ENCODE measurements at regions of chr6 and their contacts with region 1.

Region 1: DNA sequence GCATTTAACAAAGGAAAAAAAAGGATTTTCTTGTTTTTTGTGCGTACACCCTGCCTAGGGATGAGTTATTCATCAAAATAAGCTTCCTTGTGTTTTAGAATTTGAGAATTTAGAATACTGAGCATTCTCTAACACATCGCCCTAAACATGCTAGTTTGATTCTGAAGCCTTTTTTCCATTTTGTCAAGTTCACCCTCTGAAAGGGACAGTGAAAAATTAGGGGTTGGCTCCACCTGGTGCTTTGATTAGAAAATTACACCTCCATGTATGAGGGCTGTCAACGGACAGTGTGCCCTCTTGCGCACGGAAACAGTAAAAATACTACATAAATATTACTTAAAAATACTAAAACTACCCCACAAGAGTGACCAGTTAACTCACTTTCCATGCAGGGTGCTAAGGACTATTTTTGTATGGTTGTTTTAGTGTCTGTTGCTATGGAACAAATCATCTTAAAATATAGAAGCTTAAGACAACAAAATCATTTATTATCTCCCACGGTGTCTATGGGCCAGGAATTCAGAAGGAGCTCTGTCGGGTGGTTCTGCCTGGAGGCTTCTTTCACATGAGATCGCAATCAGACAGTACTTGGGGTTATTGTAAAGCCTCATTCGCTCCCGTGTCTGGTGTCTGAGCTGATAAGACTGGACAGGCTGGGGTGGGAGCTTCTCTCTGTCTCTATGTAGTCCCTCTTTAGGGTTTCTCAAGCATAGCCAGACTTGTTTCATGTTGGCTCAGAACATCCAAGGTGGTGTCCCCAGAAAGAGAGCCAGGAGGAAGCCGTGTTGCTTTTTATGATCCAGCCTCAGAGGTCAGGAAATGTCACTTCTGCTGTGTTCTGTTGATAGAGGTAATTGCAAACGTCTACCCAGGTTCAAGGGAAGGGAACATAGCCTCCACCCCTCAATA is 41.1 kb upstream of the TMEM170B start:
- DNase-seq: peak; percentile 50 to 83
- ATAC-seq: peak; percentile 72 to 90; a peak in 5 of 6 replicates
- H3K4me3 ChIP-seq: no peak overlapping the region
- H3K27ac ChIP-seq: peak overlapping the region; percentile 77 to 87
- H3K4me1 ChIP-seq: peaks cover 26% of the 10 kb centered on the region
- CTCF ChIP-seq: peak; percentile 95
- EP300 ChIP-seq: no peak
- POLR2A ChIP-seq: no peak
- RAD21 ChIP-seq: peak; percentile 98

Region 2: GRCh38 chr6:11064836-11065235 is 431.6 kb before region 1 on chr6:
- CTCF ChIA-PET with region 1: interaction called, 13 read pairs
- POLR2A ChIA-PET with region 1: no interaction called
- DNase-seq: no peak
- ATAC-seq: no peak
- H3K4me3 ChIP-seq: no peak overlapping the region
- H3K27ac ChIP-seq: no peak overlapping the region
- H3K4me1 ChIP-seq: peaks cover 3% of the 10 kb centered on the region; the same call in 1 of the 3 replicates
- CTCF ChIP-seq: no peak
- EP300 ChIP-seq: no peak
- POLR2A ChIP-seq: no peak
- RAD21 ChIP-seq: no peak

Region 3: DNA sequence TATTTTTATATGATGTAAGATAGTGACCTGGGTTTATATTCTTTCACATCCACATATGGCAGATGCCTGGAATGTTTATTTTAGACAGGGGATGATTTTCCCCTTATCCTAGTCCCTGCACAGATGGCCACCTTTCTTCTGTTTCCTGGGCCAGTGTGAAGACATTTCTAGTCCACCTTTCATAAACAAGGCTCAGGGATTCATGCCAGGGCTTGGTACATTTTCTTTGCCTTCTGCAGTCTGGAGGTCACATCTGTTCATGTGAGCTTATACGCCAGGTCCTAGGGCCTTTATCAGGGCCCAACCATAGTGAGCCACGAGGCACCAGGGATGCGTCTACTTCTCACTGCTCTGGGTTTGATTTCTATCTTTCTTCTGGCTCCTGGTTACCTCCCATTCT is 346.9 kb before region 1 on chr6:
- CTCF ChIA-PET with region 1: interaction called, 53 read pairs
- POLR2A ChIA-PET with region 1: no interaction called
- DNase-seq: no peak
- ATAC-seq: no peak
- H3K4me3 ChIP-seq: no peak overlapping the region
- H3K27ac ChIP-seq: peak overlapping the region in 1 of 2 experiments; percentile 59; a peak in 3 of 6 replicates
- H3K4me1 ChIP-seq: peaks cover 5% of the 10 kb centered on the region
- CTCF ChIP-seq: no peak
- EP300 ChIP-seq: no peak
- POLR2A ChIP-seq: no peak
- RAD21 ChIP-seq: no peak

Region 4: DNA sequence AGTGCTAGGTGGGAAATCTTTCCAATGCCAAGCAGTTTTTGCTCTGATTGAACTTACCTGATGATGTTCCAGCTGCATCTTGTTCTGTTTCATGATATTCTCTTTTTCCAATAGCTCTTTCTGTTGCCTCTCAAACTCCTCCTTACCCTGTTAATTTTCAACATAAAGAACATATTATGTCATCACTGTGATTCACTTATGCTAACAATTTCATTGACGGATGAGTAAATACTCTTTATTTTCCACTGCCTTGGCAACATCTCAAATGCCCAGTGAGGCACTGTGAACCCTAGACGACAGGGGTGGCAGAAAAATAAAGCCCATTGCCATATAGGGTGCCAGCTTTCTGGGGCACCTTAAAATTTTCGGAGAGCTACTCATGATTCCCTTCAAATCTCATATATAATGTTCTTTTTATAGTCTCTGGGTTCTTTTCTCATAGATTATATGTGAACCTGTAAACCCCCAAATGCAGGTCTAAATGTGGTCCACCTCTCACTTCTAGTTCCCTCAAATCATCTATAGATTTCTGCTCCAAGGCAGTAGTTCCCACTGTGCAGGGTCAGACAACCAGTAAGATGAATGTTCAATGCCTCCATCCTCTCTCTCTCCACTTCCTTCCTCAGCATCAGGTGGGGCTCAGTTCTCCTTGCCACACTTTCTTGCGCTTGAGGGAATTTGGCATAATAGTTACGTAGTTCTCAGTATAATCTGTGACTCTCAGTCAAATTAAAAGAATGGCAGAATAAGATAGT is 308.1 kb before region 1 on chr6:
- CTCF ChIA-PET with region 1: interaction called, 19 read pairs
- POLR2A ChIA-PET with region 1: no interaction called
- DNase-seq: peak; percentile 74 to 86
- ATAC-seq: peak; percentile 73 to 82
- H3K4me3 ChIP-seq: peak overlapping the region; percentile 36
- H3K27ac ChIP-seq: peak overlapping the region; percentile 94 to 98
- H3K4me1 ChIP-seq: peaks cover 62% of the 10 kb centered on the region
- CTCF ChIP-seq: no peak
- EP300 ChIP-seq: peak; percentile 56 to 63; a peak in 2 of 5 replicates
- POLR2A ChIP-seq: no peak
- RAD21 ChIP-seq: peak in 1 of 2 experiments; percentile 33; a peak in 1 of 5 replicates

Region 5: GRCh38 chr6:11232193-11232769 is 264.1 kb before region 1 on chr6 and contains the start of gene NEDD9:
- CTCF ChIA-PET with region 1: interaction called, 14 read pairs
- POLR2A ChIA-PET with region 1: no interaction called
- DNase-seq: peak; percentile 82 to 94
- ATAC-seq: peak; percentile 94
- H3K4me3 ChIP-seq: peak within 1 kb of the TSS; percentile 65
- H3K27ac ChIP-seq: peak within 1 kb of the TSS; percentile 88 to 91
- H3K4me1 ChIP-seq: peaks cover 29% of the 10 kb centered on the region
- CTCF ChIP-seq: no peak
- EP300 ChIP-seq: no peak
- POLR2A ChIP-seq: peak; percentile 85
- RAD21 ChIP-seq: peak in 1 of 2 experiments; percentile 25; a peak in 2 of 5 replicates
- polyA plus RNA-seq, gene NEDD9: 79.6 and 82.5 TPM in 2 replicates

Region 6: DNA sequence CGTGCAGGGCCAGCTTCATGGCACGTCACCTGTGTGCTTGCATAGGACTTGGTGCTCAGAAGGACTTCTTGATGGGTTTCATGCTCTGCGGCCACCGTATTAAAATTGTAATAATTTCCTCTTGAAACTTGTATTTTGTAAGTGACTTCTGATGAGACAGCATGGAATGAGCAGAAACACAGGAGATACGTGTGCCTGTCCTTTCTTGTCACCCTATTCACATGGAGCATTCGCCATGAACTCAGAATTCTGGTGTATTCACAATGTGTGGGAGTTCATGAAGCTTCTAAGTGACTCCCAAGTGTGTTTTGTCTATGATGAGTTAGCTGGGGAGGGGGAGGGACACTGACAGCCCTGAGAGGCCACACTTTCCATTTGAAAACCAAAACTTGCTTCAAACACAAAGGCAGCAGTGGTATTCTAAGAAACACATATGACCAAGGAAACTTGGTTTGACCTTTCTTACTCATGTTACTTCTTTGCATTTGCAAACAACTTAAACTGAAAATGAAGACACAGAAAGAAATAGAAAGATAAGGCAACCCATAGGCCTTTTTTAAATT is 171.9 kb before region 1 on chr6:
- CTCF ChIA-PET with region 1: interaction called, 16 read pairs
- POLR2A ChIA-PET with region 1: no interaction called
- DNase-seq: no peak
- ATAC-seq: no peak
- H3K4me3 ChIP-seq: no peak overlapping the region
- H3K27ac ChIP-seq: peak overlapping the region; percentile 59 to 96
- H3K4me1 ChIP-seq: peaks cover 32% of the 10 kb centered on the region
- CTCF ChIP-seq: no peak
- EP300 ChIP-seq: no peak
- POLR2A ChIP-seq: no peak
- RAD21 ChIP-seq: no peak

Region 7: GRCh38 chr6:11575408-11576033 is 79.1 kb after region 1 on chr6:
- CTCF ChIA-PET with region 1: interaction called, 11 read pairs
- POLR2A ChIA-PET with region 1: no interaction called
- DNase-seq: peak; percentile 51 to 84
- ATAC-seq: peak; percentile 99 to 100
- H3K4me3 ChIP-seq: no peak overlapping the region
- H3K27ac ChIP-seq: peak overlapping the region in 1 of 2 experiments; percentile 71; a peak in 3 of 6 replicates
- H3K4me1 ChIP-seq: 0 out of 3 replicates have a peak, but pooled peaks cover 2% of the 10 kb centered on the region
- CTCF ChIP-seq: peak; percentile 79
- EP300 ChIP-seq: no peak
- POLR2A ChIP-seq: no peak
- RAD21 ChIP-seq: peak; percentile 91 to 93

Region 8: GRCh38 chr6:11585426-11586016 is 89.1 kb after region 1 on chr6:
- CTCF ChIA-PET with region 1: no interaction called
- POLR2A ChIA-PET with region 1: no interaction called
- DNase-seq: peak; percentile 28 to 58
- ATAC-seq: peak in 1 of 2 experiments; percentile 56; a peak in 2 of 6 replicates
- H3K4me3 ChIP-seq: no peak overlapping the region
- H3K27ac ChIP-seq: peak overlapping the region; percentile 60 to 77; a peak in 5 of 6 replicates
- H3K4me1 ChIP-seq: peaks cover 33% of the 10 kb centered on the region
- CTCF ChIP-seq: peak; percentile 72
- EP300 ChIP-seq: no peak
- POLR2A ChIP-seq: no peak
- RAD21 ChIP-seq: peak; percentile 80 to 87

Region 9: GRCh38 chr6:11835065-11835464 is 338.7 kb after region 1 on chr6:
- CTCF ChIA-PET with region 1: no interaction called
- POLR2A ChIA-PET with region 1: no interaction called
- DNase-seq: no peak
- ATAC-seq: no peak
- H3K4me3 ChIP-seq: no peak overlapping the region
- H3K27ac ChIP-seq: no peak overlapping the region
- H3K4me1 ChIP-seq: no peaks in the 10 kb centered on the region
- CTCF ChIP-seq: no peak
- EP300 ChIP-seq: no peak
- POLR2A ChIP-seq: no peak
- RAD21 ChIP-seq: no peak